CD4-positive, alpha-beta T cell (primary cell): ENCODE measurements at regions of chr2 and their contacts with region 1.

Region 1: GRCh38 chr2:105576440-105577252 is 168.1 kb upstream of the NCK2 start:
- DNase-seq: peak in 4 of 14 experiments; percentile 13 to 64 (median 62)
- ATAC-seq: peak; percentile 86
- H3K4me3 ChIP-seq: no peak overlapping the region
- H3K4me3 Mint-ChIP-seq: no peak overlapping the region
- H3K27ac ChIP-seq: no peak overlapping the region
- H3K27ac Mint-ChIP-seq: peak overlapping the region; percentile 83
- H3K4me1 ChIP-seq: peaks cover 17% of the 10 kb centered on the region
- H3K4me1 Mint-ChIP-seq: peaks cover 28% of the 10 kb centered on the region
- H3K27me3 ChIP-seq: no peaks in the 10 kb centered on the region
- H3K27me3 Mint-ChIP-seq: peaks cover 4% of the 10 kb centered on the region
- CTCF ChIP-seq: peak; percentile 78

Region 2: DNA sequence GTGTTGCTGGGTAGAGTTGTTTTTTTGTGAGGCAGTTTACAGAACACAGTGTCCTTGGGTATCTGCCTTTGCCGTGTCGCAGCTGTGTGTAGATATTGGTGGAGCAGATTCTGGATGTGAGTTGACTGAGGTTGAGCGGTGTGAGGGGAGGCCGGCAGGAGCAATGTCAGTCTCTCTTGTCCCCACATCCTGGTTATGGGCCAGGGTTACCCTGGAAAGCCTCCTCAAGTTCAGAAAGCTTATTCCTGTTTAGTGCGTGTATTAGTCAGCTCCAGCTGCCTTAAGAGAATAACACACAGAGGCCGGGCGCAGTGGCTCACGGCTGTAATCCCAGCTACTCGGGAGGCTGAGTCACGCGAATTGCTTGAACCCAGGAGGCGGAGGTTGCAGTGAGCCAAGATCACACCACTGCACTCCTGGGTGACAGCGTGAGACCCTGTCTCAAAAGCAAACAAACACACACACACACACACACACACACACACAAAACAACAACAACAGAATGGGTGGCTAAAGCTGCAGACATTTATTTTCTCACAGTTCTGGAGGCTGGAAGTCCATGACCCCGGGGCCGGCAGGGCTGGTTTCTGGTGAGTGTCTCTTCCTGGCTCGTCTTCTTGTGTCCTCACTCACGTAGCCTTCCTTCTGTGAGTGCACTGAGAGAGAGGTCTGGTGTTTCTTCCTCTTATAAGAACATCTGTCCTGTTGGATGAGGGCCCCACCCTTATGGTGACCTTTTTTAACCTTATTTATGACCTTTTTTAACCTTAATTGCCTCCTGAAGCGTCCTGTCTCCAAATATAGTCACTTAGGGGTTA is 173.1 kb after region 1 on chr2:
- CTCF ChIA-PET with region 1: no interaction called
- POLR2A ChIA-PET with region 1: interaction called, 3 read pairs
- intact Hi-C with region 1: loop called in 1 of 2 experiments (anchors 10 kb)
- DNase-seq: peak in 5 of 14 experiments; percentile 24 to 61 (median 56)
- ATAC-seq: peak; percentile 2
- H3K4me3 ChIP-seq: peak overlapping the region; percentile 87
- H3K4me3 Mint-ChIP-seq: peak overlapping the region; percentile 83
- H3K27ac ChIP-seq: peak overlapping the region; percentile 52
- H3K27ac Mint-ChIP-seq: peak overlapping the region; percentile 98
- H3K4me1 ChIP-seq: peaks cover 78% of the 10 kb centered on the region
- H3K4me1 Mint-ChIP-seq: peaks cover 92% of the 10 kb centered on the region
- H3K27me3 ChIP-seq: no peaks in the 10 kb centered on the region
- H3K27me3 Mint-ChIP-seq: no peaks in the 10 kb centered on the region
- CTCF ChIP-seq: no peak

Region 3: GRCh38 chr2:105875241-105875640 is 298.6 kb after region 1 on chr2:
- CTCF ChIA-PET with region 1: no interaction called
- POLR2A ChIA-PET with region 1: no interaction called
- intact Hi-C with region 1: loop called in 1 of 2 experiments (anchors 5 kb)
- DNase-seq: no peak
- ATAC-seq: no peak
- H3K4me3 ChIP-seq: no peak overlapping the region
- H3K4me3 Mint-ChIP-seq: peak overlapping the region; percentile 9
- H3K27ac ChIP-seq: peak overlapping the region in 1 of 2 donors; percentile 8
- H3K27ac Mint-ChIP-seq: peak overlapping the region; percentile 88
- H3K4me1 ChIP-seq: peaks cover 88% of the 10 kb centered on the region
- H3K4me1 Mint-ChIP-seq: peaks cover 96% of the 10 kb centered on the region
- H3K27me3 ChIP-seq: no peaks in the 10 kb centered on the region
- H3K27me3 Mint-ChIP-seq: no peaks in the 10 kb centered on the region
- CTCF ChIP-seq: no peak

Region 4: DNA sequence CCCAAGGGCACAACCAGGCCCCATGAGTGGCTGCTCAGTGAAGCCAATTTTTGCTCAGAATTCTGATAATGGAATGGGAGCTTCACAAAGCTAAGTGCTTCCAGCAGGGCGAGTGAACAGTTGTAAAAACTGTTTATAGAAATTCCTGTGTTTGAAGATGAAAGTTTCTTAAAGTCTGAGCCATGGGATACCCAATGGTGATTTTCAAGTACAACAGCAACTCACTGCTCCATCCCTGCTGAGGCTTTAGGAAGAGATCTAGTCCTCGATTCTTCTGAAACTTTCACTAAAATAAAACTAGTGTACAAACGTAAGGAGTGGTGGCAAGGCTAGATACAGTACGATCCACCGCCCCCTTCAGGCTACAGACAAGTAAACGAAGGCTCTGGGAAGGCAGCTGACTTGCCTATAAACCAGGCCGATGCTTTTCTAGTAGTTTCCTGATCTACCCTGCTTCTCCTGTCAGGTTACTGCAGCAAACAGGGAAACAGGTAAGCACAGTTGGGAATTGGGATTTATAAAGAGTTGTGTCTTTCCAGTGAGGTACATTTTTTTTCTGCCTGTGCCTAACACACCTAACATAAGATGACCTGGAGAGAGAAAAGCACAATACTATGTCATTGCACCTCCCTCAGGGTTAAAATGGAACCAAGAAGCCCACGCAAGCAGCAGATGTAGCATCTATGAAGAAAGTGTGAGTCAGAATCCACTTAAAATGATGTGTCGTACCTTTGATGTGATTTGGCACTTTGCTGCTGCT is 508.7 kb after region 1 on chr2:
- CTCF ChIA-PET with region 1: interaction called, 3 read pairs
- POLR2A ChIA-PET with region 1: no interaction called
- intact Hi-C with region 1: loop called in 1 of 2 experiments (anchors 1 kb)
- DNase-seq: peak in 13 of 14 experiments; percentile 40 to 86 (median 60)
- ATAC-seq: peak; percentile 90
- H3K4me3 ChIP-seq: peak overlapping the region; percentile 9
- H3K4me3 Mint-ChIP-seq: peak overlapping the region; percentile 50
- H3K27ac ChIP-seq: peak overlapping the region; percentile 56 to 59
- H3K27ac Mint-ChIP-seq: peak overlapping the region; percentile 95
- H3K4me1 ChIP-seq: peaks cover 35% of the 10 kb centered on the region
- H3K4me1 Mint-ChIP-seq: peaks cover 73% of the 10 kb centered on the region
- H3K27me3 ChIP-seq: no peaks in the 10 kb centered on the region
- H3K27me3 Mint-ChIP-seq: no peaks in the 10 kb centered on the region
- CTCF ChIP-seq: peak; percentile 61

Region 5: GRCh38 chr2:106542811-106543259 is 966.2 kb after region 1 on chr2:
- CTCF ChIA-PET with region 1: no interaction called
- POLR2A ChIA-PET with region 1: no interaction called
- intact Hi-C with region 1: loop called (anchors 2 to 5 kb)
- DNase-seq: peak; percentile 50 to 83 (median 70)
- ATAC-seq: peak; percentile 98
- H3K4me3 ChIP-seq: peak overlapping the region; percentile 28
- H3K4me3 Mint-ChIP-seq: peak overlapping the region; percentile 76
- H3K27ac ChIP-seq: no peak overlapping the region
- H3K27ac Mint-ChIP-seq: no peak overlapping the region
- H3K4me1 ChIP-seq: peaks cover 6% of the 10 kb centered on the region
- H3K4me1 Mint-ChIP-seq: peaks cover 5% of the 10 kb centered on the region
- H3K27me3 ChIP-seq: peaks cover 15 to 26% of the 10 kb centered on the region in 2 experiments
- H3K27me3 Mint-ChIP-seq: peaks cover 30% of the 10 kb centered on the region
- CTCF ChIP-seq: peak; percentile 96